HEK293 (cell line): ENCODE measurements at regions of chr19 and their contacts with region 1.

Region 1: DNA sequence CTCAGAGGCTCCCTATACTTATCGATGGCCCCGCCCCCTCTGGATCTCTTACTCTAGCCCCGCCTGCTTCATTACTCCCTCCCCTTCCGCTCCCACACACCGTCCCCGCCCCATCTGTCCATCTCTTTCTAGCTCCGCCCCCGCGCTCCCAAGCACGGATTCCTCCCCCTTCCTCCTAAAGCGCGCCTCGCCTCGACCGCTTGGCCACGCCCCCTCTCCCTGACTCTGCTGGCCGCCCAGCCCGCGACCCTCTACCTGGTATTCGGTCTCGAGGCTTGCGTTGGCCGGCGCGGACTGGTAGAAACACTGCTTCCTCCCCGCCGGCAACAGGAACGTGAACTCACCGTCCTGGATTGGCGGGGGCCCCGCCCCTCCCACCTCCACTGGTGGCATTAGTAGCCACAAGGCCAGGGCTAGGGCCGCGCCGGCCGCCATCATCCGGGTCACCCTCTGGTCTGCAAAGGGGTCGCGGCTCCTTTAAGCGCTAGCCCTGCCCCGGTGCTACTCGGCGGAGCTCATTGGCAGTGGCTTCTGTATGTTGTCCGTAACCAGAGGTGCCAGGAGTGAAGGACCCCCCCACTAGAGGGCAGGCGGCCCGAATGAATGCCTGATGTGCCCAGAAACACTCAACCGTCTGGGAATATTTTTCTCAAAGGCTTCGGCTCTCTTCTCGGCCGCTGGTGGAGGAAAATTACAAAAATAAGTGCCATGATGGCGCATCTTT is at the start of gene TMED1:
- H3K4me3 ChIP-seq: peak within 1 kb of the TSS; percentile 58
- H3K27ac ChIP-seq: peak within 1 kb of the TSS; percentile 83
- H3K4me1 ChIP-seq: no peaks in the 10 kb centered on the region
- CTCF ChIP-seq: peak; percentile 68

Region 2: GRCh38 chr19:10717356-10718204 is 118.3 kb before region 1 on chr19 and contains the start of gene DNM2:
- CTCF ChIA-PET with region 1: interaction called, 7 read pairs
- POLR2A ChIA-PET with region 1: interaction called, 39 read pairs
- H3K4me3 ChIP-seq: peak within 1 kb of the TSS; percentile 97
- H3K27ac ChIP-seq: peak within 1 kb of the TSS; percentile 78
- H3K4me1 ChIP-seq: no peaks in the 10 kb centered on the region
- CTCF ChIP-seq: peak; percentile 92

Region 3: DNA sequence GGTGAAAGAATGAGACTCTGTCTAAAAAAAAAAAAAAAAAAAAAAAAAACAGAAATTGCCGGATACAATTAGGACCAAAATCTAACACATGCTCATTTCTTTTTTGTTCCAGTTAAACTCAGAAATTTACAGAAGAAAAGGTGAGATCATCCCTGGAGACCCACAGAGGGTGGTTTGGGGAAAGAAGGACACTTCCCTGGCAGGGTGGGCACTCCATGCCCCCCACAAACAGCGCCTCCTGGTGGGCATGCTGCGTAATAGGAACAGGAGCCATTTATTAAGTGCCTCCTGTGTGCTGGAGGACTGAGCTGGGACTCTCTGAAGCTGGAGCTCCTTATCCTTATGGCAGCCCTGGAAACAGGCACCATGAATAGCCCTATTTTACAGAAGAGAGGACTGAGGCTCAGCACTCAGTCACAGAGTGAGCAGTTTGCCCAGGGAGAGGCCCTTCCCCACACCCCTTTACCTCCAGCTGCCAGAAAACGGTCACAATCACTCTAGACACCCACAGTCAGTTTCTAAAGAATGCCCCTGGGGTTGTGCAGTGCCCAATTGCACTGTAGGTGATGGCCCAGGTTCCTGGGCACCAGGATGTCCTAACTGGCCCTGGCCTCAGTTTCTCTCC is 22.4 kb after region 1 on chr19:
- CTCF ChIA-PET with region 1: interaction called, 80 read pairs
- POLR2A ChIA-PET with region 1: interaction called, 31 read pairs
- H3K4me3 ChIP-seq: no peak overlapping the region
- H3K27ac ChIP-seq: no peak overlapping the region
- H3K4me1 ChIP-seq: no peaks in the 10 kb centered on the region
- CTCF ChIP-seq: peak; percentile 54

Region 4: GRCh38 chr19:10864538-10864899 is 28.6 kb after region 1 on chr19:
- CTCF ChIA-PET with region 1: interaction called, 80 read pairs
- POLR2A ChIA-PET with region 1: interaction called, 31 read pairs
- H3K4me3 ChIP-seq: no peak overlapping the region
- H3K27ac ChIP-seq: no peak overlapping the region
- H3K4me1 ChIP-seq: no peaks in the 10 kb centered on the region
- CTCF ChIP-seq: peak; percentile 87

Region 5: DNA sequence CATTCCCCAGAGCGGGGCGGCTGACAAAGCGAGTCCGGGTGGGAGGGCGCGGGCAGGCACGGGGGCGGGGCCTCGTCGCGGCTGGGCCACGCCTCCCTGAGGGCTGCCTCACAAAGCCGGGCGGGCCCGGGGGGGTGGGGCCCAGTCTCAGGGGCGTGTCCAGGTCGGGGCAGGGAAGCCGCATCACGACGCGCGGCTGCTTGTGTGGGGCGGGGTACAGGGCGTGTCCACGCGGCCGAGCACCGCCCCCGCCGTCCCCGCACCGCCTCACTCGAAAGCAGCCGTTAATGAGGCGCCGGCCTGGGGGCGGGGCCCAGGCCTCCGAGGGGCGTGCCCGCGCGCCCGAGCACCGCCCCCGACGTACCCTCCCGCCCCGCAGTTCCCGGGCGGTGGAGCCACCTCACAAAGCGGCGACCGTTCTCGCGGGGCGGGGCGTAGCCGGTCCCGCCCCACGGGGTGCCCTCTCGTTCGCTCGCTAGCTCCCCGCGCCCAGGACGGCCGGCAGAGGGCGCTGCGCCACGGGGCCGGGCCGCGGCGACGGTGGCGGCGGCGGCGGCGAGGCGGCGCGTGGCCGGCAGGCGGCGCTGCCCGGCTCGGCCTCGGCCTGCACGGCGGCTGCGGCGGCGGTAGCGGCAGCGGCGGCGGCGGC is 35.2 kb after region 1 on chr19 and contains the start of gene CARM1:
- CTCF ChIA-PET with region 1: interaction called, 80 read pairs
- POLR2A ChIA-PET with region 1: interaction called, 10 read pairs
- H3K4me3 ChIP-seq: peak within 1 kb of the TSS; percentile 88
- H3K27ac ChIP-seq: peak within 1 kb of the TSS; percentile 94
- H3K4me1 ChIP-seq: no peaks in the 10 kb centered on the region
- CTCF ChIP-seq: no peak

Region 6: DNA sequence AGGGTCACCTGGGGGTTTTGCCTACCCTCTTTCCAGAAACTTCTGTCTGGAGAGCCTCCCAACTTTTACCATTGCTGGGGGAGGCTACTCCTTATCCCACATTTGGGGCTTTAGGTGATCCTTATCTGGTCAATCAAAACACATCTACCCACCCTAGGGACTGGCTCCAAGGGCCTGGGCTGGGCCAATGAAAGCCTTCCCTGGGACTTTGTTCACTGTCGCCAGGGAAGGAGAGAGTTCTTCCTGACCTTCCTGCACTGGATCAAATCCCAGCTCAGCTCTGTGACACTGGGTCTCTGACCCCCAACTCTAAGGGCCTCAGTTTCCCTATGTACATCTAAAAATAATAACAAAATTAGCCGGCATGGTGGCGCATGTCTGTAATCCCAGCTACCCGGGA is 415.3 kb after region 1 on chr19:
- CTCF ChIA-PET with region 1: no interaction called
- POLR2A ChIA-PET with region 1: interaction called, 11 read pairs
- H3K4me3 ChIP-seq: no peak overlapping the region
- H3K27ac ChIP-seq: no peak overlapping the region
- H3K4me1 ChIP-seq: no peaks in the 10 kb centered on the region
- CTCF ChIP-seq: no peak